ENCODE measurements at regions of chr18 and their contacts with region 1.

Region 1: DNA sequence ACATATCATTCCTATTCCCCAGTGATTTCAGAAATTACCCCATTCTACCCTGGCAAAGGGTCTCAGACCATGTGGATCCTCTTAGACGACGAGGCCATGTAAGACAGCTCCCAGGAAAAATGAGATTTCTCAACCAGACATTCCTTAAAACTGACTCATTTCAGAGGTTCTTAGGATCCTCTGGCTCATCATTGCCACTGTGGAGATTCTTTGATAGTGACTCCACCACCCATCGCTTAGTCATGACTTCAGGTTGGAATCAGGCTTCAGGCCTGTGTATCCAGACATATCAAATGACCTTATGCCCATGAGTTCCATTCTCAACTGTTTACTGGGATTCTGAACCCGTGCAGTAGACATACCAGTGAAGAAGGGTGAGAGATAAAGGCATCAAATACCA is 245.6 kb upstream of the TCF4 start:
- DNase-seq: no peak
- H3K4me3 ChIP-seq: no peak overlapping the region
- H3K4me1 ChIP-seq: no peaks in the 10 kb centered on the region
- H3K27me3 ChIP-seq: no peaks in the 10 kb centered on the region

Region 2: DNA sequence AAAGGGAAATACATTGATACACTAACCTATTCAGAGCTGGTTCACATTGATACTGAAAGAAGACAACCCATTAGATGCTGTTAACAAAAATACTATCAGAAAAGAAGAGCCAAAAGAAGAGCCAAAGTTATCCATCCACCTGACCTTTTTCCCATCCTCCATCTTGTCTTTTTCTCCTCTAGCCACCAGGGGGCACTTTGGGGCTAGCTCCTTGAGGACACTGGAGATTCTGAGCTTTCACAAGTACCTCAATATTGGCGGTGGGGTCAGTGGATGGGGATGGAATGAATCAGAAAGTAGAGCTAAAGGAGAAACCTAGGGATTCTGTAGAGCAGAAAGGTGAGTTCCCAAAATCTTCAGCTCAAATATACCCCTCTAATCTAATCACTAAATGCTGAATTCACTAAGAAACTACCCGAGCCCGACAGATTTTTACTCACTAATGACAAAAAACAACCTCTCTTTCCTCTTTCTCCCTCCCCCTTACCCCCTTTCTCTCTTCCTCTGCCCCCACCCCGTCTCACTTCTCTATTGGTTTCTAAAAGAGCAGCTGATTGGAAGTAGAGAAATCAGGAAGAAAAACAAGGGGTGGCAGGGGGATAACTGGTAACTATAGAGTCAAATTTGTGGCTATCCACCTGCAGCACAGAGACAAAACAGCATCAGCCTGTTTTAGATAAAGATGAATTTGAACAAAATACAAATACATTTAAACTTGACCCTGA is 448.8 kb before region 1 on chr18:
- in situ Hi-C with region 1: loop called (anchors 25 kb)
- DNase-seq: peak; percentile 50 to 69
- H3K4me3 ChIP-seq: no peak overlapping the region
- H3K4me1 ChIP-seq: no peaks in the 10 kb centered on the region
- H3K27me3 ChIP-seq: no peaks in the 10 kb centered on the region

Region 3: DNA sequence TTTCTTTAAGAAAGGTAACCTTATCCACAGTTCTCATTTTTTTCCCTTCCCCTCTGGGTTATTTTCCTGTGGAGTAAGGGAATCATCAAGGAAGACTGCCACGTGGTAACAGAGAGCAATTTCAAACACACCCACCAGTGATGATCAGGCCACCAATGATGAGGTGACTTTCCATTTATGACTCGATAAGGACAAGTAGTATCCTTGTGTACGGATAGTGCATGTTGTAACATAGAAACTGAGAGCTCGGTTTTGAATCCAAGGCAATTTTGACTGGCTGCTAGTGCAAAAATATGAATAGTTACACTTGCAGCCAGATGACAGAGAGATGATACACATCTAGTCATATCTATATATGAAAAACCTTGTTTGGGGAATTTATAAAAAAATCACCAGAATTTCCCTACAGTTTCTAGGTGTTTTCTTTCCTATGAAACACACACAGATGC is 101.9 kb before region 1 on chr18:
- in situ Hi-C with region 1: loop called (anchors 25 kb)
- DNase-seq: no peak
- H3K4me3 ChIP-seq: no peak overlapping the region
- H3K4me1 ChIP-seq: peaks cover 10% of the 10 kb centered on the region
- H3K27me3 ChIP-seq: no peaks in the 10 kb centered on the region

Region 4: DNA sequence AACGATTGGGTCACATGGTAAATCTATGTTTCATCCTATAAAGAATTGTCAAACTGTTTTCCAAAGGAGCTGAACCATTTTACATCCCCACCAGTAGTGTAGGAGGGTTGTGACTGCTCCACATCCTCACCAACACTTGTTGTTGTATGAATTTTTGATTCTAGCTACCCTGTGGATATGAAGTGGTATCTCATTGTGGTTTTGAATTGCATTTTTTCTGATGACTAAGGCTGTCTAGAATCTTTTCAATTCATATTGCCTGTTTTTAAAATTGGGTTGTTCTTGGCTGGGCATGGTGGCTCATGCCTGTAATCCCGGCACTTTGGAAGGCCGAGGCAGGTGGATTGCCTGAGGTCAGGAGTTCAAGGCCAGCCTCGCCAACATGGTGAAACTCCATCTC is 760.4 kb after region 1 on chr18:
- in situ Hi-C with region 1: no loop called
- DNase-seq: no peak
- H3K4me3 ChIP-seq: no peak overlapping the region
- H3K4me1 ChIP-seq: no peaks in the 10 kb centered on the region
- H3K27me3 ChIP-seq: no peaks in the 10 kb centered on the region

Measured in HAP-1 (cell line).